Esophagus muscularis mucosa (tissue), 4 donors: ENCODE measurements at regions of chr2 and their contacts with region 1.

Region 1: DNA sequence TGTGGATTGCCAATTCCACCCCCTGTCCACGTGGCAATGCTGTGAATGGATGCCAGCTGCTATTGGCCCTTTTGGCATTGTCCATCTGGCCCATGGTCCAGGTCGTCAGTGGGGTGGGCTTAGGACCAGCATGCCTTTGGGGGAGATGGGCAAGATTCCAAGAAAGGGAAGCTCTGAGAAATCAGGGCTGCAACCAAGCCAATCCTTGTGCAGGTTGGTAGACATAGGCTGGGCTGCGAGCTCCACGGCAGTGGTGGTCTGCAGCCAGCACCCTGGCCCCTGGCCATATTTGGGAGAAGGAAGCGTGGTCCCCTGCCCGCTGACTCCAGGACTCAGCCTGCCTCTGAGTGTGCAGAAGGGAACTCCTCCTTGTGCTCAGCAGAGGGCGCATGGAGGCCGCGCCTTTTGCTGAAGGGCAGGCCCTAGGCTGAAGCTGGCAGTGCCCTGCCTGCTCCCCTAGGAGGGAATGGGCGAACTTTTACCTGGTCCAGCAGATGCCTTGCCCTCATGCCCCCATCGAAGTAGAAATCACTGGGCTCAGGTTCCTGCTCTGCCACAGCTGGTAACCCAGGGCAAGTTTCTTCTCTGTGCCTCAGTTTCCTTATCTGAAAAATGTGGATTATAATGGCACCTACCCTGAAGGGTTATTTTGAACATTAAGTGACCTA is 5.4 kb downstream of the SPR start:
- DNase-seq: no peak
- H3K4me3 ChIP-seq: no peak overlapping the region
- H3K27ac ChIP-seq: no peak overlapping the region
- H3K4me1 ChIP-seq: peaks cover 25 to 40% (median 32%) of the 10 kb centered on the region in 4 donors
- H3K27me3 ChIP-seq: peaks cover 0 to 31% (median 0%) of the 10 kb centered on the region in 4 donors
- CTCF ChIP-seq: peak; percentile 61 to 74 (median 64)
- EP300 ChIP-seq: no peak
- POLR2A ChIP-seq: no peak

Region 2: GRCh38 chr2:72825241-72826155 is 67.1 kb before region 1 on chr2 and contains the start of gene EXOC6B:
- intact Hi-C with region 1: no loop called
- DNase-seq: peak; percentile 97
- H3K4me3 ChIP-seq: peak within 1 kb of the TSS; percentile 72 to 96 (median 88)
- H3K27ac ChIP-seq: peak within 1 kb of the TSS; percentile 84 to 88 (median 86)
- H3K4me1 ChIP-seq: peaks cover 8 to 27% (median 20%) of the 10 kb centered on the region in 4 donors
- H3K27me3 ChIP-seq: no peaks in the 10 kb centered on the region
- CTCF ChIP-seq: peak in 1 of 3 experiments; percentile 12
- EP300 ChIP-seq: no peak
- POLR2A ChIP-seq: peak; percentile 16
- total RNA-seq, gene EXOC6B: 24.5 to 45.9 (median 37.4) TPM

Region 3: GRCh38 chr2:72846538-72847095 is 46.0 kb before region 1 on chr2:
- intact Hi-C with region 1: no loop called
- DNase-seq: peak; percentile 26
- H3K4me3 ChIP-seq: no peak overlapping the region
- H3K27ac ChIP-seq: no peak overlapping the region
- H3K4me1 ChIP-seq: no peaks in the 10 kb centered on the region
- H3K27me3 ChIP-seq: peaks cover 0 to 21% (median 0%) of the 10 kb centered on the region in 4 donors
- CTCF ChIP-seq: no peak
- EP300 ChIP-seq: no peak
- POLR2A ChIP-seq: no peak

Region 4: GRCh38 chr2:72952110-72952823 is 59.6 kb after region 1 on chr2:
- intact Hi-C with region 1: no loop called
- DNase-seq: no peak
- H3K4me3 ChIP-seq: no peak overlapping the region
- H3K27ac ChIP-seq: no peak overlapping the region
- H3K4me1 ChIP-seq: no peaks in the 10 kb centered on the region
- H3K27me3 ChIP-seq: no peaks in the 10 kb centered on the region
- CTCF ChIP-seq: no peak
- EP300 ChIP-seq: no peak
- POLR2A ChIP-seq: no peak

Region 5: GRCh38 chr2:72973566-72974435 is 81.2 kb after region 1 on chr2:
- intact Hi-C with region 1: loop called (anchors 5 kb)
- DNase-seq: no peak
- H3K4me3 ChIP-seq: no peak overlapping the region
- H3K27ac ChIP-seq: no peak overlapping the region
- H3K4me1 ChIP-seq: no peaks in the 10 kb centered on the region
- H3K27me3 ChIP-seq: no peaks in the 10 kb centered on the region
- CTCF ChIP-seq: peak; percentile 39 to 77 (median 47)
- EP300 ChIP-seq: no peak
- POLR2A ChIP-seq: no peak

Region 6: DNA sequence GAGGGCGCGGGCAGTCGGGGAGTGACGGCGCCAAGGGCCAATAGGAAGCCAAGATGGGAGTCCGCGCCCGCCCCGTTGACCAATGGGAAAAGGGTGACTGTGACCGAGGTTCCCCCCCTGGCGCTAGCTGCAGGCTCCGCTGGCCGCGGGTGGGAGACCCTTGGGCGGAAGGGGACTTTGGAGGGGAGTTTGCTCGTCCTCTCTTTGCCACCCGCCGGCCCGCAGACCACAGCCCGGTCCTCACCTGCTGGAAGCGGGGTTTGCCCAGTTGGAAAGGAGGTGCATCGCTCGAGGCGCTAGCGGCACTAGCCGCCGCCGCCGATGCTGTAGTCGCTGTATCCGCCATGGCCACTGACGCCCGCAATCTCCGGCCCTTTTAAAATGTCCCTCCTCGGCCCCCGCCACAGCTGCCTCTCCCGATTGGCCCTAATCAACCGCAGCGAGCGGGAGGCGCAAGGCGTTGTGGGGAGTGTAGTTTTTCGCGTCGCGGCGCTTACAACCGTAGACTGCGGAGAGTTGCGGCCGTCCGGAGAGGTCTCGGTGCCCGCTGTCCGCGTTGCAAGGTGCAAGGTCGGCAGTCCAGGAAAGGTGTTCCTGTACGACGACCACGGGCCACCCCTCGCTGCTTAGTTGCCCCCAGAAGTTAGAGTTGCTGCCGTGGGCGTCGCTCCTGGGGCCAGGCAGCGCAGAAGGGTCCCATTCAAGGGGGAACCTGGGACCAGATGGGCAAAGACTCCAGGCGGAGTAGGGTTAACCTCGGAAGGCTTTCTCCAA is 178.9 kb after region 1 on chr2 and contains the start of gene SFXN5:
- intact Hi-C with region 1: loop called (anchors 10 kb)
- DNase-seq: peak; percentile 100
- H3K4me3 ChIP-seq: peak within 1 kb of the TSS; percentile 65 to 94 (median 82)
- H3K27ac ChIP-seq: peak within 1 kb of the TSS; percentile 83 to 97 (median 93)
- H3K4me1 ChIP-seq: peaks cover 34 to 47% (median 40%) of the 10 kb centered on the region in 4 donors
- H3K27me3 ChIP-seq: no peaks in the 10 kb centered on the region
- CTCF ChIP-seq: peak in 2 of 3 experiments; percentile 18 to 36
- EP300 ChIP-seq: no peak
- POLR2A ChIP-seq: no peak
- total RNA-seq, gene SFXN5: 5.8 to 10.0 (median 6.8) TPM